Lower leg skin (tissue), 4 donors: ENCODE measurements at regions of chr12 and their contacts with region 1.

Region 1: GRCh38 chr12:81136519-81136918 is 58.6 kb downstream of the ACSS3 start:
- DNase-seq: no peak
- H3K4me3 ChIP-seq: no peak overlapping the region
- CTCF ChIP-seq: no peak
- POLR2A ChIP-seq: no peak

Region 2: GRCh38 chr12:79512053-79512452 is 1624.5 kb before region 1 on chr12:
- intact Hi-C with region 1: loop called (anchors 5 kb)
- DNase-seq: no peak
- H3K4me3 ChIP-seq: no peak overlapping the region
- CTCF ChIP-seq: no peak
- POLR2A ChIP-seq: no peak

Region 3: GRCh38 chr12:81196595-81196994 is 60.1 kb after region 1 on chr12:
- intact Hi-C with region 1: no loop called
- DNase-seq: no peak
- H3K4me3 ChIP-seq: no peak overlapping the region
- CTCF ChIP-seq: no peak
- POLR2A ChIP-seq: no peak